Mammary epithelial cell (primary cell): ENCODE measurements at regions of chr1 and their contacts with region 1.

Region 1: GRCh38 chr1:85307987-85308832 is 31.8 kb upstream of the BCL10 start:
- DNase-seq: peak; percentile 67
- H3K4me3 ChIP-seq: no peak overlapping the region
- H3K27ac ChIP-seq: peak overlapping the region; percentile 2
- H3K4me1 ChIP-seq: peaks cover 10% of the 10 kb centered on the region
- H3K27me3 ChIP-seq: no peaks in the 10 kb centered on the region
- CTCF ChIP-seq: peak; percentile 91 to 98

Region 2: DNA sequence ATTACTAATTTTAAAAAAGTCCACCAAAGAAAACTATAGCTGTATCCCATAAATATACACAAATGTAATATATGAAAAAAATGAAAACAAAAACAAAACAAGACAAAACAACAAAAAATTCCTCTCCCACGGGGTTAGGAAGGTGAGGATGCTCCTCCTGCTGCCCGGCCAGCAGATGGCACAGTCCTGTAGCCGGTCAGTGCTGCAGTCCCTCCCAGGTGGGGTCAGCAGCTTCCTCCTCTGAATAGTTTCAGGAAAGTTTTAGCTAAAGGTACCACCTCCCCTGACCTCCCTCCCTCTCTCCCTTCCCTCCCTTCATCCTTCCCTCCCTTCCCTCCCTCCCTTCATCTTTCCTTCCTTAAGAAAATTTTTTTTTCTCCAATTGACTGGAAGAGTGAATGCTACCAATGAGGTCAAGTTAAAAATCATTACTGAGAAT is 36.1 kb after region 1 on chr1:
- CTCF ChIA-PET with region 1: interaction called, 5 read pairs
- dilution Hi-C with region 1: no loop called
- in situ Hi-C with region 1: no loop called
- intact Hi-C with region 1: loop called (anchors 1 kb)
- DNase-seq: peak; percentile 33
- H3K4me3 ChIP-seq: peak overlapping the region in 2 of 3 experiments; percentile 14 to 18
- H3K27ac ChIP-seq: peak overlapping the region; percentile 18
- H3K4me1 ChIP-seq: peaks cover 38% of the 10 kb centered on the region
- H3K27me3 ChIP-seq: no peaks in the 10 kb centered on the region
- CTCF ChIP-seq: peak; percentile 61 to 86

Region 3: DNA sequence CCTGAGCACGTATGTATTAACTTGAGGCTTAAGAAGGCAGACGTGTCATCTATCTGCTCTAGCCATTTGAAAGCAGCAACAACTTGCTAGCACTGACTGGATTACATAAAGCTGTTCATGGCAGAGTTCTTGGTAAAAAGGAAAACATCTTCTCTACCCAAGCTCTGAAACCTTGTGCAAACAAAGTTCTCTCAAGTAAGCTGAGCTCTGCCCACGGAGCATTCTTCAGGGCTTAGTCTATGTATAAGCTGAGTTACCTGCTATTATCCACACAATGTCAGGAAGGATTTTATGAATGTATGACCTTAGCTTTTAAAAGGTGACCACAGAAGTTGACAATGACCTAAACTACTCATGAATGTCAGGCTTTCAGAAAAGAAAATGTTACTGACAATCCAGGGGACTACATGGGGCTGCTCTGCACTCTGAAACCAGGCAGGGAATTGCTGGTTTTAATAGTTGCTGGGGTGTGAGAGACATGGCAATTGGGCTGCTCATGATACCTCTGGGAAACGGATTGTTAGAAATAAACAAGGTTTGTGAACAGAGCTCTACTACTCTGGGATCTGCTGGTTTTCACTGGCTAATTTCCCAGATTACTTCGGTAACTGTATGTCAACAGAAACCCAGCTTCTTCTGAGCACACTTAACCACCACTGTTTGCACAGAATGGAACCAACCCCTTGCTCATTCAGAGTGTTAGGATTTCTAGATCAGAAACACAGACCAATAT is 242.7 kb after region 1 on chr1:
- CTCF ChIA-PET with region 1: no interaction called
- dilution Hi-C with region 1: loop called (anchors 25 kb)
- in situ Hi-C with region 1: no loop called
- intact Hi-C with region 1: no loop called
- DNase-seq: peak; percentile 72
- H3K4me3 ChIP-seq: no peak overlapping the region
- H3K27ac ChIP-seq: no peak overlapping the region
- H3K4me1 ChIP-seq: peaks cover 36% of the 10 kb centered on the region
- H3K27me3 ChIP-seq: no peaks in the 10 kb centered on the region
- CTCF ChIP-seq: no peak

Region 4: GRCh38 chr1:85612704-85613361 is 304.6 kb after region 1 on chr1:
- CTCF ChIA-PET with region 1: no interaction called
- dilution Hi-C with region 1: no loop called
- in situ Hi-C with region 1: no loop called
- intact Hi-C with region 1: loop called (anchors 1 kb)
- DNase-seq: peak; percentile 49
- H3K4me3 ChIP-seq: no peak overlapping the region
- H3K27ac ChIP-seq: peak overlapping the region; percentile 85
- H3K4me1 ChIP-seq: peaks cover 37% of the 10 kb centered on the region
- H3K27me3 ChIP-seq: no peaks in the 10 kb centered on the region
- CTCF ChIP-seq: peak; percentile 71 to 83

Region 5: GRCh38 chr1:85707990-85708828 is 400.0 kb after region 1 on chr1 and contains the start of gene ZNHIT6:
- CTCF ChIA-PET with region 1: no interaction called
- dilution Hi-C with region 1: no loop called
- in situ Hi-C with region 1: no loop called
- intact Hi-C with region 1: loop called (anchors 5 kb)
- DNase-seq: peak; percentile 96
- H3K4me3 ChIP-seq: peak within 1 kb of the TSS; percentile 87 to 99 (median 88)
- H3K27ac ChIP-seq: peak within 1 kb of the TSS; percentile 53
- H3K4me1 ChIP-seq: peaks cover 12% of the 10 kb centered on the region
- H3K27me3 ChIP-seq: no peaks in the 10 kb centered on the region
- CTCF ChIP-seq: peak in 1 of 2 donors; percentile 42
- total RNA-seq, gene ZNHIT6: 8.5 to 22.5 TPM

Region 6: DNA sequence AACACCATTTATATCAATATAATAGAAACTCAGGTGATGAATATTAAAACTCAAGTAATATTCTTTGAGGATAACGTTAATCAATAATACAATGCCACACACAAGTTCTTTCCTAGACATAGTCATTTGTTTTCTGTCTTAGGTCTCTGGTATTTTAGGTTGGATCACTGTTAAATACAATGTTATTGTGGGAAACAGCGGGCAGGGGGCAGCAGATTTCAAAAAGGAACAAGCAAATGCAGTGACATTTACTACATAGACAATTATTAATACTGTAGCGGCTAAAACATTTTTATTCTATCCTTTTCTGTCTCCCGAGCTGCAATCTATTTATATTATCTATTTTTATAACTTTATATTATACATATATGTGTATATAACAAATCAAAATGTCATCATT is 586.4 kb after region 1 on chr1:
- CTCF ChIA-PET with region 1: no interaction called
- dilution Hi-C with region 1: no loop called
- in situ Hi-C with region 1: loop called in 1 of 2 experiments (anchors 25 kb)
- intact Hi-C with region 1: no loop called
- DNase-seq: no peak
- H3K4me3 ChIP-seq: no peak overlapping the region
- H3K27ac ChIP-seq: no peak overlapping the region
- H3K4me1 ChIP-seq: no peaks in the 10 kb centered on the region
- H3K27me3 ChIP-seq: no peaks in the 10 kb centered on the region
- CTCF ChIP-seq: peak; percentile 39 to 41